MCF 10A (cell line): ENCODE measurements at regions of chr16 and their contacts with region 1.

Region 1: GRCh38 chr16:87316923-87317749 is at the start of gene C16orf95:
- DNase-seq: peak; percentile 95
- H3K4me3 Mint-ChIP-seq: peak within 1 kb of the TSS; percentile 83
- H3K27ac Mint-ChIP-seq: peak within 1 kb of the TSS; percentile 93
- H3K4me1 Mint-ChIP-seq: peaks cover 6% of the 10 kb centered on the region
- H3K27me3 Mint-ChIP-seq: no peaks in the 10 kb centered on the region
- CTCF ChIP-seq: peak; percentile 50
- total RNA-seq, gene C16orf95: 5.7 and 5.8 TPM in 2 replicates

Region 2: GRCh38 chr16:87305505-87306391 is 11.4 kb before region 1 on chr16:
- CTCF ChIA-PET with region 1: interaction called, 6 read pairs
- POLR2A ChIA-PET with region 1: interaction called, 12 read pairs
- intact Hi-C with region 1: no loop called
- DNase-seq: no peak
- H3K4me3 Mint-ChIP-seq: no peak overlapping the region
- H3K27ac Mint-ChIP-seq: no peak overlapping the region
- H3K4me1 Mint-ChIP-seq: no peaks in the 10 kb centered on the region
- H3K27me3 Mint-ChIP-seq: no peaks in the 10 kb centered on the region
- CTCF ChIP-seq: no peak

Region 3: GRCh38 chr16:87375426-87376135 is 58.4 kb after region 1 on chr16:
- CTCF ChIA-PET with region 1: no interaction called
- POLR2A ChIA-PET with region 1: interaction called, 69 read pairs
- intact Hi-C with region 1: no loop called
- DNase-seq: peak; percentile 63
- H3K4me3 Mint-ChIP-seq: peak overlapping the region; percentile 62
- H3K27ac Mint-ChIP-seq: peak overlapping the region; percentile 99
- H3K4me1 Mint-ChIP-seq: peaks cover 8% of the 10 kb centered on the region
- H3K27me3 Mint-ChIP-seq: no peaks in the 10 kb centered on the region
- CTCF ChIP-seq: no peak